ENCODE measurements at regions of chr12 and their contacts with region 1.

Region 1: GRCh38 chr12:49662998-49663843 is 39.9 kb downstream of the PRPF40B start:
- DNase-seq: peak; percentile 90
- ATAC-seq: peak; percentile 98
- H3K4me3 Mint-ChIP-seq: peak overlapping the region; percentile 74
- H3K27ac Mint-ChIP-seq: peak overlapping the region; percentile 97
- H3K4me1 Mint-ChIP-seq: peaks cover 73% of the 10 kb centered on the region
- H3K27me3 Mint-ChIP-seq: no peaks in the 10 kb centered on the region

Region 2: DNA sequence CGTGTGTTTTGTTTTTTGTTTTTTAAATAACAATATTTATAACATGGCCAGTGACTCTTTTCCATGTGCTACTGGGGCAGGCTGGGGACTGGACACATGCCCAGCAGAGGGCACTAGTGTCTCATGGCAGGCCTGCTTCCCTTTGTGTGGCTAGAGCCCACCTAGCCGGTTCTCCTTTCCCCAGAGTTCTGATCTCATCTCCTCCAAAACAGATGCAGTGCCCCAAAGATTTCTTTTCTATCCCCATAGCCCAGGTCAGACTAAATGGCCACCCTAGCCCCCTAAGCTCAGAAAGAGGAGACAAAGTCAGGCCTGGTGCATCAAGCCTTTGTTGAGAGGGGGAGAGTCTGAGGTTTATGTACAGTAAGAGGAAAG is 18.6 kb before region 1 on chr12:
- CTCF ChIA-PET with region 1: interaction called, 16 read pairs
- POLR2A ChIA-PET with region 1: interaction called, 4 read pairs
- DNase-seq: peak; percentile 89
- ATAC-seq: peak; percentile 96
- H3K4me3 Mint-ChIP-seq: no peak overlapping the region
- H3K27ac Mint-ChIP-seq: peak overlapping the region; percentile 87
- H3K4me1 Mint-ChIP-seq: peaks cover 41% of the 10 kb centered on the region
- H3K27me3 Mint-ChIP-seq: no peaks in the 10 kb centered on the region

Region 3: GRCh38 chr12:49698619-49699545 is 35.7 kb after region 1 on chr12:
- CTCF ChIA-PET with region 1: interaction called, 695 read pairs
- POLR2A ChIA-PET with region 1: interaction called, 30 read pairs
- DNase-seq: peak; percentile 68
- ATAC-seq: peak; percentile 78
- H3K4me3 Mint-ChIP-seq: peak overlapping the region; percentile 76
- H3K27ac Mint-ChIP-seq: peak overlapping the region; percentile 92
- H3K4me1 Mint-ChIP-seq: peaks cover 58% of the 10 kb centered on the region
- H3K27me3 Mint-ChIP-seq: no peaks in the 10 kb centered on the region

Region 4: GRCh38 chr12:49707128-49707811 is 44.0 kb after region 1 on chr12 and contains the start of gene FMNL3:
- CTCF ChIA-PET with region 1: interaction called, 695 read pairs
- POLR2A ChIA-PET with region 1: interaction called, 30 read pairs
- DNase-seq: peak; percentile 98
- ATAC-seq: peak; percentile 96
- H3K4me3 Mint-ChIP-seq: peak within 1 kb of the TSS; percentile 90
- H3K27ac Mint-ChIP-seq: peak within 1 kb of the TSS; percentile 83
- H3K4me1 Mint-ChIP-seq: peaks cover 42% of the 10 kb centered on the region
- H3K27me3 Mint-ChIP-seq: peaks cover 26% of the 10 kb centered on the region
- total RNA-seq, gene FMNL3: 53.5 to 54.5 TPM